ENCODE measurements at regions of chr4 and their contacts with region 1.

Region 1: DNA sequence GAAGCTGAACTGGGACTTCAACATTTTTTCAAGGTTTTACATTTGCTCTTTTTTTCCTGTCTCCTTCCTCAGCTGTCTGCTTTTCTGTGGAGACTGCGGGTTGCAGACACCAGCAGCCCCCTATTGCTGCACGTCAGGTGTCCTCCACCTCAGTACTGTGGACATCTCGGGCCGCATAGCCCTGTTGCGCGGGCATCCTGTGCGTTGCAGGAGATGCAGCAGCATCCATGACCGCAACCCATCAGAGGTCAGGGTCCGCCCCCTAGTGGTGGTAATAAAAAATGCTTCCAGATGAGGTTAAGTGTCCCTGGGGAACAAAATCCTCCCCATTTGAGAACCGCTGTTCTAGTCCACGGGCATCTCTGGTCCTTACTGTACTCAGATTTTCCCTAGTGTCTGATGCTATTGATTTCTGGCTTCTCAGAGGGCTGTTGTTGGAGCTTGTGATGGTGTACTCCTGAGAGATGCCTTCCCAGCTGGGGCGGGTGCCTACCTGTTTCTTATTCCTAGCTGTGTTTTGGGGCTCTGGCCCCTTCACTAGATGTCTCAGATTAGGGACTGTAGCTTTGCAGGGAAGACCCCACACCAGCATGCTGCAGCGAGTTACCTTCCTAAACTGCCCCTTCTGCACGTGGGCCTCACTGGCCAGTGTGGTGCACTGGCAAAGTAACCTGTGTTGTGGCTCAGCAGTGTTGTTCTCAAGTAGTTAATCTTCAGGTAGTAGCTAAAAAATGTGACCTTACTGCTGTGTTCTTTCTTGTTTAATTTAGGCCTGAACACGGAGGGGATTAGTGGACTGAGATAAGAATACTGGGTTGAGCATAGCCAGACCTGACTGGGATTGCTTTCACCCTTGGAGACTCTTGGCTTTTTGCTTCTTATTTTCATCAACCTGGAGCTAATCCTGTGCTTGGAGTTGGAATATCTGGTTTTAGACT is 28.2 kb downstream of the NSD2 start:
- DNase-seq: peak; percentile 85
- ATAC-seq: peak; percentile 85

Region 2: GRCh38 chr4:1746265-1746691 is 153.1 kb before region 1 on chr4:
- intact Hi-C with region 1: loop called (anchors 2 kb)
- DNase-seq: peak; percentile 83
- ATAC-seq: peak; percentile 72

Region 3: GRCh38 chr4:1856042-1856788 is 43.2 kb before region 1 on chr4 and contains the start of gene LETM1:
- intact Hi-C with region 1: loop called (anchors 1 kb)
- DNase-seq: peak; percentile 98
- ATAC-seq: peak; percentile 98
- total RNA-seq, gene LETM1: 39.8 TPM

Region 4: GRCh38 chr4:1939664-1940509 is 40.5 kb after region 1 on chr4:
- intact Hi-C with region 1: no loop called
- DNase-seq: no peak
- ATAC-seq: peak; percentile 67

Region 5: DNA sequence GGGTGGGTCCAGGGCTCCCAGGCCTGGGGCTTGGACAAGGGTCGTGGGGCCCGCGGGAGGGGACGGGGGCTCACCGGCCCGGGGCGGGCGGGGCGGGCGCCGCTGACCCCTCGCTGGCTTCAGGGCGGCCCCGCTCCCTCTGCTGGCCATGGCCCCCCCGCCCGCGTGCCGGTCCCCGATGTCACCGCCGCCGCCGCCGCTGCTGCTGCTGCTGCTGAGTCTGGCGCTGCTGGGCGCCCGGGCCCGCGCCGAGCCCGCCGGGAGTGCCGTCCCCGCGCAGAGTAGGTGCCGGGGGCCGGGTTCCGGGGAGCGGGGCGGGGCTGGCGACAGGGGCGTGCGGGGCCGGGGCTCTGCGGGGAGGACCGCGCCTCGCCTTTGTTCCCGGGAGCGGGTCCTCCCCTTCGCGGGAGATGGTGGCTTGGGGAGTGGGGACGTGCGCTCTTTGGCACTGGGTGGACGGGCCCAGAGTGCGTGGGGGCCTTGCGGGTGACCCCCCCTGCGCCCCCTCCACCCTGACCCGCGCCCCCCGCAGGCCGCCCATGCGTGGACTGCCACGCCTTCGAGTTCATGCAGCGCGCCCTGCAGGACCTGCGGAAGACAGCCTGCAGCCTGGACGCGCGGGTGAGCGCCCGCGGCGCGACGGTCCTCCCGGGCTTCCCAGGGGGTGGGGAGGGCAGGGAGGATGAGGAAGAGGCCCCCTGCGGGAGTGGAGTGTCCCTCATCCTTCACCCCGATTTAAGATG is 143.0 kb after region 1 on chr4:
- intact Hi-C with region 1: no loop called
- DNase-seq: peak; percentile 70
- ATAC-seq: peak; percentile 7

Region 6: GRCh38 chr4:2071912-2072867 is 172.8 kb after region 1 on chr4:
- intact Hi-C with region 1: no loop called
- DNase-seq: peak; percentile 68
- ATAC-seq: no peak